PC-3 (cell line): ENCODE measurements at regions of chr3 and their contacts with region 1.

Region 1: DNA sequence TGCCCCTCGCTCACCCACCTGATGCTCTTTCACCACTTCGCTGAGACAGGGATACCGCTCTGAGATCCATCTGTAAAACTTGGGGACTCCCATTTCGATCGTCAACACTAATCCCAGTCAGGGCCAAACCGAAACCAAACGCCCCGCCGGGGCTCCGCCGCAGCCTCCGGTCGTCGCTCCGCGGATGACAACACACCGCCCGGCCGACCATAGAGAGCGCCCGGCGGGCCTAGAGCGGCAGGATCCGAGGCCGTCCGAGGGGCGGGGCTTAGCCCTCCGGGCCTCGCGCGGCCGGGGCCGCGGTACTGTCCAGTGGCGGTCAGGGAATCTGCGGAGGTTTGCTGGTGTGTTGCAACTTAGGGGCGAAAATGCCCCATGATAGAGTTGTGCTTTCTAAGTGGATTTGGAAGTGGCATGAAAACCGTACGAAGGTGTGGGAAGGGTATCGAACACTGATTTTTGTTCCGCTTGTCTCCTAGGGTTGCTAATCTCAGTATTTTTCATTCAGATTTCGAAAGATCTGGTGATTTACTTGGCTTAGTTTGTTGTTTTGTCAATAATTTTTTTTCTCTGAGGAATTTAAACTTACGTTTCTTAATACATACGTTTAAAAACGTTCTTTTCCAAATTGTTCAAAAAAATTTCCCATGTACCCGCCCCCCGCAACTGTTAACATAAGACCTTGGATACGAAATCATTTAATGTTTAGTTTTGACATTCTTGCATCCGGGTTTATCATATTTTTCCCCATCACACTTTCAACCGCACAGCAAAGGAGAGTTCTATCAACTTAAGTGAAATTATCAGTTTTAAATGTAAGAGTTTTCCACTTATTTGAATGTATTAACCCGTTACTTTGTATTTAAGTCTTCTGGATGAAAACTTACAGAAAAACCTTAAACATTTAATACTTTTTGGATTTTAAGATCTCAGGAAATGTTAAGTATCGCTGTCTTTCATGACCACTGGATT is at the start of gene XRN1:
- DNase-seq: peak; percentile 91
- ATAC-seq: peak; percentile 97
- H3K4me3 ChIP-seq: peak within 1 kb of the TSS; percentile 98
- H3K27ac ChIP-seq: peak within 1 kb of the TSS; percentile 59
- H3K4me1 ChIP-seq: peaks cover 19% of the 10 kb centered on the region
- H3K27me3 ChIP-seq: no peaks in the 10 kb centered on the region
- CTCF ChIP-seq: no peak
- total RNA-seq, gene XRN1: 16.5 and 23.0 TPM in 2 replicates

Region 2: DNA sequence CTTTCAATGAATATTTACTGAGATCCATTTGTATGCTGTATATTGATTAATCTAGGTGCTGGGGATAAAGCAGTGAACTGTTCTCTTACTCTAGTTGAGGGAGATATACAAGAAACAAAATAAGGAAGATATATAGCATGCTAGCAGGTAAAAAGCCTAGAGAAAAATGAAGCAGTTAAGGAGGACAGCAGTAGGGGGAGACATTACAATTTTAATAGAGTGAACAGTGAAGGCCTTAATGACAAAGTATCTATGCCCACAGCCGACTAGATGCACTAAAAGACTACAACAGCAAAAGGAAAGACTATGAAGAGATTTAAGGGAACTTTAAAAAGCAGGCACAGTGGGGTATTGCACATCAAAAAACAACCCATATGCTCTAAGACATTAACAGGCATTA is 81.7 kb before region 1 on chr3:
- CTCF ChIA-PET with region 1: no interaction called
- POLR2A ChIA-PET with region 1: no interaction called
- intact Hi-C with region 1: loop called (anchors 5 kb)
- DNase-seq: peak; percentile 45
- ATAC-seq: peak; percentile 45
- H3K4me3 ChIP-seq: no peak overlapping the region
- H3K27ac ChIP-seq: no peak overlapping the region
- H3K4me1 ChIP-seq: peaks cover 11% of the 10 kb centered on the region; the same call in 1 of the 2 replicates
- H3K27me3 ChIP-seq: no peaks in the 10 kb centered on the region
- CTCF ChIP-seq: peak; percentile 63

Region 3: DNA sequence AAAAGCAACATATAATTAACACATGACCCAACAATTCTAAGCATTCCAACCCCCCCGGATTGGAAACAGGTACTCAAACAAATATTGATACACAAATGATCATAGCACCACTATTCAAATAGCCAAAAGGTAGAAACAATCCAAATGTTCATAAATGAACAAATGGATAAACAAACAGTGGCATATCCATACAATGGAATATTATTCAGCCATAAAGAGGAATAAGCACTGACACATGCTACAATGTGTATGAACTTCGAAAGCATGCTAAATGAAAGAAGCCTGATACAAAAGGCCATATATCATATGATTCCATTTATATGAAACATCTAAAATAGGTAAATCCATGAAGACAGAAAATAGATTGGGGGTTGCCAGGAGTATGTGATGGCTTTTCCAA is 63.1 kb before region 1 on chr3:
- CTCF ChIA-PET with region 1: no interaction called
- POLR2A ChIA-PET with region 1: no interaction called
- intact Hi-C with region 1: no loop called
- DNase-seq: no peak
- ATAC-seq: no peak
- H3K4me3 ChIP-seq: no peak overlapping the region
- H3K27ac ChIP-seq: no peak overlapping the region
- H3K4me1 ChIP-seq: no peaks in the 10 kb centered on the region
- H3K27me3 ChIP-seq: no peaks in the 10 kb centered on the region
- CTCF ChIP-seq: no peak

Region 4: DNA sequence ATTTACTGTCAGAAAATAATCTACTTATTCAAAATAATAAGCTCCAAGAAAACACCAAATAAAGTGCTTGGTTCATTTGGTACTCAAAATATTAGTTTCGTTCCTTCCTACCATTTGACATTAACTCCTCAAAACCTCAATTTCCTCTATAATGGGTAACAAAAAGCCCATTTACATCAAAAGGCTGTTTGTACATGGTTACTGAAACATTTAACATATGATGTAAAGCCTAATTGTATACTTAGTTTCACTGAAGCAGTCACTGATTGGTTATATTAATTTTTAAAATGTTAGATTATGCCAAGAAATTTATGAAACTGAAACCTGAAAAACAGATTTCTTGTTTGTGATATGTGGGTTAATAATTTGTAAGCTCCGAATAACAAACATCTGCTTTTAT is 15.0 kb before region 1 on chr3:
- CTCF ChIA-PET with region 1: no interaction called
- POLR2A ChIA-PET with region 1: no interaction called
- intact Hi-C with region 1: no loop called
- DNase-seq: no peak
- ATAC-seq: no peak
- H3K4me3 ChIP-seq: no peak overlapping the region
- H3K27ac ChIP-seq: no peak overlapping the region
- H3K4me1 ChIP-seq: no peaks in the 10 kb centered on the region
- H3K27me3 ChIP-seq: no peaks in the 10 kb centered on the region
- CTCF ChIP-seq: no peak

Region 5: GRCh38 chr3:142501004-142501926 is 53.1 kb after region 1 on chr3:
- CTCF ChIA-PET with region 1: no interaction called
- POLR2A ChIA-PET with region 1: no interaction called
- intact Hi-C with region 1: loop called (anchors 2 kb)
- DNase-seq: peak; percentile 88
- ATAC-seq: peak; percentile 94
- H3K4me3 ChIP-seq: no peak overlapping the region
- H3K27ac ChIP-seq: peak overlapping the region; percentile 79
- H3K4me1 ChIP-seq: peaks cover 21% of the 10 kb centered on the region
- H3K27me3 ChIP-seq: no peaks in the 10 kb centered on the region
- CTCF ChIP-seq: no peak

Region 6: GRCh38 chr3:142578327-142579223 is 130.4 kb after region 1 on chr3 and contains the start of gene ATR:
- CTCF ChIA-PET with region 1: no interaction called
- POLR2A ChIA-PET with region 1: no interaction called
- intact Hi-C with region 1: loop called (anchors 5 kb)
- DNase-seq: peak; percentile 92
- ATAC-seq: peak; percentile 92
- H3K4me3 ChIP-seq: peak within 1 kb of the TSS; percentile 92
- H3K27ac ChIP-seq: peak within 1 kb of the TSS; percentile 70
- H3K4me1 ChIP-seq: peaks cover 24% of the 10 kb centered on the region
- H3K27me3 ChIP-seq: no peaks in the 10 kb centered on the region
- CTCF ChIP-seq: no peak
- total RNA-seq, gene ATR: 15.6 and 25.7 TPM in 2 replicates

Region 7: GRCh38 chr3:143103652-143104051 is 655.5 kb after region 1 on chr3:
- CTCF ChIA-PET with region 1: no interaction called
- POLR2A ChIA-PET with region 1: no interaction called
- intact Hi-C with region 1: no loop called
- DNase-seq: no peak
- ATAC-seq: no peak
- H3K4me3 ChIP-seq: no peak overlapping the region
- H3K27ac ChIP-seq: no peak overlapping the region
- H3K4me1 ChIP-seq: no peaks in the 10 kb centered on the region
- H3K27me3 ChIP-seq: no peaks in the 10 kb centered on the region
- CTCF ChIP-seq: no peak